ENCODE measurements at regions of chr3 and their contacts with region 1.

Region 1: GRCh38 chr3:100254168-100254777 is 6.5 kb upstream of the TBC1D23 start:
- DNase-seq: peak; percentile 48
- ATAC-seq: peak; percentile 89

Region 2: GRCh38 chr3:100073899-100074307 is 180.4 kb before region 1 on chr3:
- intact Hi-C with region 1: loop called (anchors 5 kb)
- DNase-seq: no peak
- ATAC-seq: peak; percentile 55

Measured in left ventricle myocardium superior (tissue), 1 donor.